ENCODE measurements at regions of chr19 and their contacts with region 1.

Region 1: GRCh38 chr19:41439441-41440222 is at the start of gene DMAC2:
- DNase-seq: peak; percentile 80
- H3K4me3 ChIP-seq: peak within 1 kb of the TSS; percentile 100
- CTCF ChIP-seq: peak; percentile 48

Region 2: GRCh38 chr19:41427647-41428480 is 11.8 kb before region 1 on chr19:
- CTCF ChIA-PET with region 1: interaction called, 6 read pairs
- POLR2A ChIA-PET with region 1: interaction called, 12 read pairs
- DNase-seq: no peak
- H3K4me3 ChIP-seq: peak overlapping the region; percentile 58
- CTCF ChIP-seq: no peak

Region 3: GRCh38 chr19:41541990-41542584 is 102.5 kb after region 1 on chr19:
- CTCF ChIA-PET with region 1: interaction called, 11 read pairs
- POLR2A ChIA-PET with region 1: no interaction called
- DNase-seq: no peak
- H3K4me3 ChIP-seq: no peak overlapping the region
- CTCF ChIP-seq: peak; percentile 24

Region 4: DNA sequence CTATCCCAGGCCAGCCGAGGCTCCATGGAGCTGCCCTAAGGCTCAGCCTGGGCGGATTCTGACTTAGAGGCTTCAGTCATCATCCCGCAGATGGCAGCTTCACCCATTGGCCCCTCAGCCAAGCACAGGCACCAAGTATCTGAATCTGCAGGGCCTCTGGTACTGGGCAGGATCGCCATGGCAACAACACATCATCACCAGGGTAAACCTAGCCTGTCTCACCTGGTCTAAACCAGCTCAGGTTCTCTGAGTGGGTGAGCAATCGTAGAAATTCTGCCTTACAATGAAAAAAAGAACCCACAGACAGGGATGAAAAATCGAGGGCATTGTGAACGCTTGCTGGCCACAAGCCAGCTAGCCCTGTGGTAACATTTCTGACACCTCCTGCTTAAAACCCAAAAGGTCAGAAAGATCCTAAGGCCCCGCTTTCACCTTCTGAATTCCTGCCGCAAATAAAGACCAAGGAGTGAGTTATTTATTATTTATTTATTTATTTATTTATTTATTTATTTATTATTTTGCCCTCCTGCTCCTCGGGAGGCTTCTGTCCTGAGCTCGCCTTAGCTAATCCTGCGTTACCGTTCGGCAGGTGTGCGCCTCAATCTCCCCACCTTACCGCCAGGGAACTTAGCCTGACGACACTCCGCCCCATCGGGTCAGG is 124.4 kb after region 1 on chr19:
- CTCF ChIA-PET with region 1: interaction called, 255 read pairs
- POLR2A ChIA-PET with region 1: no interaction called
- DNase-seq: no peak
- H3K4me3 ChIP-seq: no peak overlapping the region
- CTCF ChIP-seq: no peak

Measured in AG04449 (cell line).